Calu3 (cell line): ENCODE measurements at regions of chr3 and their contacts with region 1.

Region 1: GRCh38 chr3:55746808-55747413 is 259.8 kb upstream of the WNT5A start:
- DNase-seq: no peak
- H3K4me3 Mint-ChIP-seq: no peak overlapping the region
- H3K27ac Mint-ChIP-seq: no peak overlapping the region
- H3K4me1 Mint-ChIP-seq: no peaks in the 10 kb centered on the region
- H3K27me3 Mint-ChIP-seq: no peaks in the 10 kb centered on the region
- CTCF ChIP-seq: no peak

Region 2: GRCh38 chr3:55485211-55485791 is 261.6 kb before region 1 on chr3:
- CTCF ChIA-PET with region 1: no interaction called
- intact Hi-C with region 1: loop called (anchors 10 kb)
- DNase-seq: peak; percentile 31
- H3K4me3 Mint-ChIP-seq: no peak overlapping the region
- H3K27ac Mint-ChIP-seq: no peak overlapping the region
- H3K4me1 Mint-ChIP-seq: no peaks in the 10 kb centered on the region
- H3K27me3 Mint-ChIP-seq: peaks cover 61% of the 10 kb centered on the region
- CTCF ChIP-seq: no peak

Region 3: GRCh38 chr3:55910543-55910942 is 163.6 kb after region 1 on chr3:
- CTCF ChIA-PET with region 1: no interaction called
- intact Hi-C with region 1: no loop called
- DNase-seq: no peak
- H3K4me3 Mint-ChIP-seq: no peak overlapping the region
- H3K27ac Mint-ChIP-seq: no peak overlapping the region
- H3K4me1 Mint-ChIP-seq: no peaks in the 10 kb centered on the region
- H3K27me3 Mint-ChIP-seq: no peaks in the 10 kb centered on the region
- CTCF ChIP-seq: no peak